Aorta (tissue), 5 donors: ENCODE measurements at regions of chrX and their contacts with region 1.

Region 1: GRCh38 chrX:77014377-77015372 is 432.5 kb upstream of the FGF16 start:
- DNase-seq: no peak
- ATAC-seq: no peak
- H3K4me3 ChIP-seq: no peak overlapping the region
- H3K27ac ChIP-seq: no peak overlapping the region
- H3K4me1 ChIP-seq: no peaks in the 10 kb centered on the region
- H3K27me3 ChIP-seq: no peaks in the 10 kb centered on the region

Region 2: DNA sequence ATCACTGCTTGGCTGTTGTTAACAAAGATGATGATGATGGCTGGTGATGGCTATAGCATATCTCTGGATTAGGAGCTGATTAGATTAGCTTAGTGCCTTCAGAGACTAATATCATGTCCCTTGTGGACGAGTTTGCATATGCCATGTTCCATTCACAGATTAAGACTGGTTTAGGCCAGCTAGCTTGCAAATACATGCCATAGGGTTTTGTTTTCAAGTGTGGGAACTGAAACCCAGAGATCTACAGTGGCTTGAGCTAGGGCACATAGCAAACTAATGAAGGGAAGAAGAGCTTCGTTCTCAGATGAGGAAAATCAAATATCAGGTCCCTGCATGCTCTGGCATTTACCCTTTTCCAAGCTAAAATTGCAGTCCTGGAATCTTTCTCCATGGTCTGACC is 94.9 kb before region 1 on chrX:
- intact Hi-C with region 1: loop called in 1 of 2 experiments (anchors 5 kb)
- DNase-seq: no peak
- ATAC-seq: no peak
- H3K4me3 ChIP-seq: no peak overlapping the region
- H3K27ac ChIP-seq: no peak overlapping the region
- H3K4me1 ChIP-seq: no peaks in the 10 kb centered on the region
- H3K27me3 ChIP-seq: no peaks in the 10 kb centered on the region

Region 3: DNA sequence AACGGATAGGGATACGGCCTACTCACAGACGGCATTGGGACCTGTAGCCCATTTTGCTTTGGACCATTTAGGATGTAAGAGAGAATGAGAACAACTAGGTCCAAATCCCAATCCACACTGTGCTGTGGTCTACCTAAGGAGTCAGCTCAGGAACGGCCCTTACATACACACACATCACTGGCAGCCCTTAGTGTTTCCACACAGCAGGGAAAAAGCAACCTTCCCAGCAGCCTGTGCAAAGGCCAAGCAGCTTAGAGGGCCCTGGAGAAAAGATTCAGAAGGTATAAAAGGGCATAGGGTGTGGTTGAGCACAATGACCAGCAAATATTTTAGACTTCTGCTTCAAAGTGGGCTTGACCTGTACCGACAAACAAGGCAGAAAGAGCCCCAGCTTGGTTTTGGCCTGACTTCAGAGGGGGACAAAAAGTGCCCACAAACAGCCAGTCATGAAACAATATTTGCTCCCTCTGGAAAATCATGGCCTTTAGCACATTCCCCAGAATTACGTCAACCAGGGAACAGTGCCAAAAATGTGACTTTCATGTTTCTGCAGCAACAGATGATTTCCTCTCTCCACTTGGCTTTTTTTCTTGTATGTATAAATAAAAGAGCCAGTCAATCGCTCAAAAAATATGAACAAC is 73.0 kb after region 1 on chrX:
- intact Hi-C with region 1: loop called in 1 of 2 experiments (anchors 5 kb)
- DNase-seq: peak in 1 of 2 donors; percentile 48
- ATAC-seq: peak; percentile 64
- H3K4me3 ChIP-seq: no peak overlapping the region
- H3K27ac ChIP-seq: peak overlapping the region; percentile 36 to 90
- H3K4me1 ChIP-seq: peaks cover 0 to 1% of the 10 kb centered on the region in 2 donors
- H3K27me3 ChIP-seq: no peaks in the 10 kb centered on the region

Region 4: GRCh38 chrX:77899081-77899828 is 884.6 kb after region 1 on chrX and contains the start of gene COX7B:
- intact Hi-C with region 1: loop called in 1 of 2 experiments (anchors 5 kb)
- DNase-seq: peak in 1 of 2 donors; percentile 53
- ATAC-seq: peak; percentile 89
- H3K4me3 ChIP-seq: peak within 1 kb of the TSS; percentile 71 to 77
- H3K27ac ChIP-seq: peak within 1 kb of the TSS; percentile 25 to 74
- H3K4me1 ChIP-seq: no peaks in the 10 kb centered on the region
- H3K27me3 ChIP-seq: no peaks in the 10 kb centered on the region
- total RNA-seq, gene COX7B: 127 to 163 TPM